ENCODE measurements at regions of chr18 and their contacts with region 1.

Region 1: DNA sequence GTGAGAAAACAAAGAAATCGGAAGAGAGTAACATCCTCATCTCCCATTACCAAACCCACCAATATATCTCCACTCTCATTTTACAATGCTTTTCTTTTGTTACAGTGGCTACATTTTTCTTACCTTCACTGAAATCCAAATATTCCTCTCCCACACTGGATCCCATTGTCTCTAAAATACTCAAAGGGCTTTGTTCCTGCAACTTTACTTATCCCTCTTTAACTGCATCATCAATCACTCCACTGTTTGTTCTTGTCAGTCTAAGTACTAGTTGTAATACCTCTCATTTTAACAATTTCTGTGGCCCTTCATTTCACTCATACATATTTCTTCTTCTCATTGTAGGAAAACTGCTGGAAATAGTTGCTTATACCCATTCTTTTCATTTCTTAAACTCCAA is 464.2 kb upstream of the PIK3C3 start:
- DNase-seq: no peak
- ATAC-seq: no peak
- H3K4me3 ChIP-seq: no peak overlapping the region
- H3K27ac ChIP-seq: no peak overlapping the region
- H3K4me1 ChIP-seq: no peaks in the 10 kb centered on the region
- H3K27me3 ChIP-seq: no peaks in the 10 kb centered on the region

Region 2: DNA sequence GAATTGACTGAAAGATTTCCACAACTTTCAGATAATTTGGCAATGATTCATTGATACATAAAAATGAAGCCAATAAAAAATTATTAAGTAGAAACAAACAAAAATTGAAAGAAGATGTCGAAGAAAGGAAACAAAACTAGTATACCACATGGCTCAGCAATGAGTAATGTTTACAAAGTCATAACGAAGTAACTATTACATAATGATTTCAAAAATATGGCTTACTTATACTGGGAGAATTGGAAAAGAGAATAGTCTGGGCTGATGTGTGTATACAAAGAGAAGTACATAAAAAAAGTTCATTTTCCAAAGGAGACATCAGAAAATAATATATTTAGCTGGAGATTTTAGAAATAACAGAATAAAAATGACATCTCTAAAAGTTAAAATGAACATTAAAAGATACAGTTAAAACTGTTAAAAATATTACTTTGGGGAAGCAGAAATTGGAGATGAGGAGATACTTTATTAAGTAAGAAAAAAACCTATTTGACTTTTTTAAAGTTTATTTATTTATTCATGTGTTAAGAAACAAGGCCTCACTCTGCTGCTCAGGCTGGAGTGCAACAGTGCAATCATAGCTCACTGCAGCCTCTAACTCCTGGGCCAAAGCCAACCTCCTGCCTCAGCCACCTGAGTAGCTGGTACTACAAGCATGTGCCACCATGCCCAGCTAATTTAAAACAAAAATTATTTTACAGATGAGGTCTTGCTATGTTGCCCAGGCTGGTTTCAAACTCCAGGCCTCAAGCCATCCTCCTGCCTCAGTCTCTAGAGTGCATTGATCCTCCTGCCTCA is 54.4 kb after region 1 on chr18:
- intact Hi-C with region 1: loop called in 1 of 4 experiments (anchors 10 kb)
- DNase-seq: no peak
- ATAC-seq: no peak
- H3K4me3 ChIP-seq: no peak overlapping the region
- H3K27ac ChIP-seq: no peak overlapping the region
- H3K4me1 ChIP-seq: no peaks in the 10 kb centered on the region
- H3K27me3 ChIP-seq: no peaks in the 10 kb centered on the region

Measured in right cardiac atrium (tissue), 5 donors.